GM13976 (cell line): ENCODE measurements at regions of chr22 and their contacts with region 1.

Region 1: DNA sequence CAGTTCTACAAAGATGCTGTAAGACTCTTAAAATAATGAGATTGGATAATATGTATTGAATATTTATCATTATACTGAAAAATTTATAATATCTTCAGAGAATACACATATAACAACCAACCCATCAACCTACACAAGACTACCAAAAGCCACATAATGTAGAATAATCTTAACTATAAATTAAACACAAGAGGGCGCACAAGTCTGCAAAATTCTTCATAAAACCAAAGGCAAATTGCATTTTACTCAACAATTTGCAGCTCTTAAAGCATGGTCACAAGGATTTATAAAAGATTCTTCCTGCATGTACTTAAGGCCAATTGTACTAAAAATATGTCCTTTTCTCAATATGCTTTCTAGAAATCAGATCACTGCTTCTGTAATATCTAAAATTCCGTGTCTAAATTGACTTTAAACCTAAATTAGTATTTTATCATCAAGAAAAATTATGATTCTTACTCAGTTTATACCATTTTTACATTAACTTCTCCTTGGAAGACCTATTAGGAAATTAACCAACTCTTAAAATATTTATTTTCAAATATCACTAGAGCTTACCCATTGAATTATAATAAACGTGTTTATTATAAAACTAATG is 79.0 kb downstream of the TTC28 start:
- DNase-seq: peak; percentile 43
- CTCF ChIP-seq: no peak

Region 2: DNA sequence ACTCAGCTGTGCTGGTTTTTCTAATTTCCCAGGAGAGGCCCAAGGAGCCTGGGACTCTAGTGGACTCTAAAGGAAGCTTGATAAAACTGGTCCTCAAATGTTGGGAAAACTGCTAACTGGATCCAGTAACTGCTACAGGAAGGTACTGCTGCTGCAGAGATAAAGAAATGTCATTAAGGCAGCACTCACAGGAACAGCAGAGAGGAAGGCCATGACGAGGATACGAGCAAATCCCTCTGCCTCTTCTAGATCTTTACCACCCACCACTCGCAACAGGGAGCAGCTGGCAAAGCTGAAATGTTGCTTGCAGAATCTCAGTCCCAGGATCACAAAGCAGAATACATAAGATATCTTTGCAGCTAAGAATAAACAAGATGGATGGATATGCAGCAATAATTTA is 55.5 kb after region 1 on chr22:
- in situ Hi-C with region 1: no loop called
- DNase-seq: no peak
- CTCF ChIP-seq: no peak

Region 3: DNA sequence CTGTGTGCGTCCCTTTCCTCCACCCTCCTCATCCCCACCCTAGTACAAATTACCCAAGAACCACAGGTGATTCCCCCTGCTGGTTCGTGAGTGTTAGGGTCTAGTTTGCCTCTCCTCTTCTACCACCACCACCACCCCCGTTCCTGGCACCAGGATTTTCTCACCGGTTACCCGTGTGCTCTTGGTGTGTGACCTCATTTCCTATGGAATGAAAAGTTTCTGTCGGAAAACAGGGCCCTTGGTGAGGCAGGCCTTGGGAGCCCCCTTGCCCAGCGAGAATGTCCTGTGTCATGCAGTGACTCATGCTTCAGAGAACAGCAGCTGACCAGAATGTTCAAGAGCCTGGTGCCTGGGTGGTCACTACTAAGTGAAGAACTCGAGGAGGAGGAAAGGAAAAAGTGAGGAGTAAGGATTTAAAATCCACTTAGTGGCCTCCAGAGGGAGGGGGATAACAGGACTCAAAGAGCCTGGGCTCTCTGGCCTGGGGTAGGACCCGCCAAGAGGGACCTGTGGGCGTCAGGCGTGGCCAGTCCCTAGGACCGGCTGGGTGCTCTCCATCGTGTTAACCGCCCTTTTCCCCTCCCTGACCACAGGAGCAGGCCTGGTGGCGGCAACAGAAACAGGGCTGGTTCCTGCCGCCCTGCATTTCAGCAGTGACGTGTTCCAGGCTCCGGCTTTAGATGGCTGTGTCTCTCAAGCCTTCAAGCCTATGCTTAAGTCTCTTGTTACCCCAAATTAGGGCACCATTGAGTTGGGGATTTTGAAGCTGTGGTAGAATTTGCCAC is 430.8 kb after region 1 on chr22:
- in situ Hi-C with region 1: loop called (anchors 10 kb)
- DNase-seq: peak; percentile 35
- CTCF ChIP-seq: no peak